T-cell (primary cell): ENCODE measurements at regions of chr10 and their contacts with region 1.

Region 1: DNA sequence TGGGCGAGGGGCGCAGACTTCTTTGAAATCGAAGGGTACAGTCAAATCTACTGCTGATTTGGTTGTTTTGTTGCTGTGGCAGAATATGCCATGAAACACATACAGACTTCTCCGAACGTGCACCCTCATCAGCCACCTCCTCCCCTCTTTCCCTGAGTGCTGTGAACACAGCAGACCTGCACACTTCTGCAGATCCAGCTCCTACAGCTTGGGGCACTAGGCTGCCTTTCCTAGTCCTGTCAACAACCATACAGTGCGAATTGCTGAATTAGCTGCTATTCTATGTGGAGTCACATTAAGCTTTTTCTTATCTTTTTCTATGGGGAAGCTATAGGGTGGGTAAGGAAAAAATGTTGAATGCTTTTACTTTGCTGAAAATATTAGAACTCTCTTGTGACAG is 57.5 kb downstream of the COL17A1 start:
- DNase-seq: peak in 12 of 35 experiments; percentile 9 to 37 (median 14)
- ATAC-seq: peak; percentile 63 to 78 (median 70)
- H3K4me3 ChIP-seq: no peak overlapping the region
- H3K4me3 Mint-ChIP-seq: no peak overlapping the region
- H3K27ac ChIP-seq: no peak overlapping the region
- H3K27ac Mint-ChIP-seq: peak overlapping the region in 1 of 2 donors; percentile 53
- H3K4me1 ChIP-seq: peaks cover 0 to 2% of the 10 kb centered on the region in 2 experiments
- H3K4me1 Mint-ChIP-seq: peaks cover 0 to 16% (median 0%) of the 10 kb centered on the region in 3 donors
- H3K27me3 ChIP-seq: no peaks in the 10 kb centered on the region
- H3K27me3 Mint-ChIP-seq: no peaks in the 10 kb centered on the region

Region 2: DNA sequence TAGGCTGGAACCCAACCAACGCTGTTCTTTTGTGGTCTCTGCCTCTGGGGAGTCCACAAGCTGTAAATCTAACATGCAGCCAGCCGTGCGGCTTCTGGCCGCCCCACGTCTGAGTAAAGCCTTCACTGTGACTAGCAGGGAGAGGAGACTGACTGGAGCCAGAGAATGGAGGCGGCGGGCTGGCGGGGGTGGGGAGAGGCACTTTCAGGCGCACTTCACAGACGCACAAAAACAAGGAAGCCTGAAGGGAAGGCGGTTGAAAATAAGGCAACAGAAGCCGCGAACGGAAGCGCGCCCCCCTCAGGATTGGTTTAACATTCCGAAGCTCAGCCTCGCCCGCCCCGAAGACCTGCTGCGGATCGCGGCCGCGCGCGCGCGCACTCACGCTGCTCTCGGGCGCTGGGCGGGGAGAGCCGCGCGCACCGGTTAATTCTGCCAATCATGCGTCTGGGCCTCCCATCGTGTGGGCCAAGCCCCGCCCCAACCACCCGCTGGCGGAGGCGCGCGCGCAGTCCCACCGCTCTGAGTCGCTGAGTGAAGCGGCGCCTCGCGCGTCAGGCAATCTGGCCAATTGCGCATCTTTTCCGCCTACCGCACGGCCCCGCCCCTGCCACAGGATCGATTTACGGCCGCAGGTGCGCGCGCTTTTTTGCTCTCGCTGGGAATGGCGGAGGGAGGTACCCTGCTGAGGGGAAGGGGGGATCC is 93.5 kb after region 1 on chr10 and contains the start of gene SFR1:
- CTCF ChIA-PET with region 1: interaction called in 1 of 2 experiments, 11 read pairs
- POLR2A ChIA-PET with region 1: no interaction called
- DNase-seq: peak; percentile 97 to 100 (median 99)
- ATAC-seq: peak; percentile 88 to 97 (median 94)
- H3K4me3 ChIP-seq: peak within 1 kb of the TSS; percentile 91 to 97
- H3K4me3 Mint-ChIP-seq: peak within 1 kb of the TSS; percentile 90 to 93 (median 92)
- H3K27ac ChIP-seq: peak within 1 kb of the TSS; percentile 100
- H3K27ac Mint-ChIP-seq: peak within 1 kb of the TSS; percentile 98 to 99
- H3K4me1 ChIP-seq: peaks cover 10 to 14% of the 10 kb centered on the region in 2 experiments
- H3K4me1 Mint-ChIP-seq: peaks cover 24 to 32% (median 26%) of the 10 kb centered on the region in 3 donors
- H3K27me3 ChIP-seq: no peaks in the 10 kb centered on the region
- H3K27me3 Mint-ChIP-seq: no peaks in the 10 kb centered on the region
- total RNA-seq, gene SFR1: 9.0 to 11.3 (median 9.7) TPM

Region 3: GRCh38 chr10:104146882-104147281 is 118.7 kb after region 1 on chr10:
- CTCF ChIA-PET with region 1: no interaction called
- POLR2A ChIA-PET with region 1: no interaction called
- DNase-seq: no peak
- ATAC-seq: no peak
- H3K4me3 ChIP-seq: no peak overlapping the region
- H3K4me3 Mint-ChIP-seq: no peak overlapping the region
- H3K27ac ChIP-seq: no peak overlapping the region
- H3K27ac Mint-ChIP-seq: no peak overlapping the region
- H3K4me1 ChIP-seq: no peaks in the 10 kb centered on the region
- H3K4me1 Mint-ChIP-seq: no peaks in the 10 kb centered on the region
- H3K27me3 ChIP-seq: peaks cover 0 to 2% of the 10 kb centered on the region in 2 experiments
- H3K27me3 Mint-ChIP-seq: peaks cover 12 to 19% of the 10 kb centered on the region in 2 donors